Heart left ventricle (tissue), 16 donors: ENCODE measurements at regions of chr4 and their contacts with region 1.

Region 1: DNA sequence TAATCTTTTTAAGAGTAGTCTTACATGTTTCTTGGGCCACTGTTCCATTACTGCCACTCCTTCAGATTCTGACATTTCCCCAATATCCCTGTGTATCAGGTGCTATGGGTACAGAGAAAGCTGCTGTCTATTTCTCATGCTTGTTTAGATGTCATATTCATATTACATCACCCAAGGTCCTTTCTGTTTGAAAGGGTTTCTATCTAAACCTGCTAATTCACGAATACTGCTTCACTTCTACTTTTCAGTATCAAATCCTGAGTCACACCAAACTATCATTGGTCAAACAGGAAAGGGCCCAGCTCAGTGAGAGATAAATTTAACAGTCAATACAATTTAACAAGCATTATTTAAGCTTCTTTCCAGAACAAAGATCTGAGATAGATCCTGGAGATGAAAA is 241.4 kb downstream of the UGT8 start:
- DNase-seq: no peak
- ATAC-seq: no peak
- H3K4me3 ChIP-seq: no peak overlapping the region
- H3K27ac ChIP-seq: no peak overlapping the region
- H3K4me1 ChIP-seq: no peaks in the 10 kb centered on the region
- H3K27me3 ChIP-seq: no peaks in the 10 kb centered on the region
- CTCF ChIP-seq: no peak
- POLR2A ChIP-seq: no peak

Region 2: DNA sequence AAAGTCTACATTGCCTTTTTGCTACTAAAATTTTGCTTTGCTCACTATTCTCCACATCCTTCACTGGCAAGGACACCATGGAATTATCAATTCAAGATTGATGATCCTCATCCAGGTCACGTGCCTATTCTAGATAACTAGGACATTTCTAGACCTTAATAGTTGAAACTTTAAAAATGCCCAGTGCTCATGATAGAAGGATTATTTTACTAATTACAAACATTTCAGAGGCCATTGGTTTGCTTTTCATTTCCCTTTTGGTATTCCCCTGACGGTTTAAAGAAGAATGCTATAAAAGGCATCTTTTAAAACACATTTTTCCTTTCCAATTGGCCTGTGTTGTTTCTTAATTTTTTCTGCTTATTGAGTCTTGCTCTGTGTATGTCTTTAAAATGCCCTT is 24.1 kb after region 1 on chr4:
- intact Hi-C with region 1: loop called in 1 of 10 experiments (anchors 1 kb)
- DNase-seq: no peak
- ATAC-seq: no peak
- H3K4me3 ChIP-seq: no peak overlapping the region
- H3K27ac ChIP-seq: no peak overlapping the region
- H3K4me1 ChIP-seq: no peaks in the 10 kb centered on the region
- H3K27me3 ChIP-seq: no peaks in the 10 kb centered on the region
- CTCF ChIP-seq: no peak
- POLR2A ChIP-seq: no peak